Activated CD8-positive, alpha-beta memory T cell treated with anti-CD3 and anti-CD28 coated beads, Interleukin-2, amount 10 ng/mL, durations not matched to agents 7 days and 5 days (primary cell): ENCODE measurements at regions of chr9 and their contacts with region 1.

Region 1: GRCh38 chr9:127734747-127735529 is at the start of gene TOR2A:
- DNase-seq: peak; percentile 98
- ATAC-seq: peak; percentile 93
- H3K4me3 Mint-ChIP-seq: peak within 1 kb of the TSS; percentile 76
- H3K27ac Mint-ChIP-seq: peak within 1 kb of the TSS; percentile 83
- H3K4me1 Mint-ChIP-seq: peaks cover 20% of the 10 kb centered on the region
- H3K27me3 Mint-ChIP-seq: no peaks in the 10 kb centered on the region
- total RNA-seq, gene TOR2A: 24.1 to 26.8 TPM

Region 2: DNA sequence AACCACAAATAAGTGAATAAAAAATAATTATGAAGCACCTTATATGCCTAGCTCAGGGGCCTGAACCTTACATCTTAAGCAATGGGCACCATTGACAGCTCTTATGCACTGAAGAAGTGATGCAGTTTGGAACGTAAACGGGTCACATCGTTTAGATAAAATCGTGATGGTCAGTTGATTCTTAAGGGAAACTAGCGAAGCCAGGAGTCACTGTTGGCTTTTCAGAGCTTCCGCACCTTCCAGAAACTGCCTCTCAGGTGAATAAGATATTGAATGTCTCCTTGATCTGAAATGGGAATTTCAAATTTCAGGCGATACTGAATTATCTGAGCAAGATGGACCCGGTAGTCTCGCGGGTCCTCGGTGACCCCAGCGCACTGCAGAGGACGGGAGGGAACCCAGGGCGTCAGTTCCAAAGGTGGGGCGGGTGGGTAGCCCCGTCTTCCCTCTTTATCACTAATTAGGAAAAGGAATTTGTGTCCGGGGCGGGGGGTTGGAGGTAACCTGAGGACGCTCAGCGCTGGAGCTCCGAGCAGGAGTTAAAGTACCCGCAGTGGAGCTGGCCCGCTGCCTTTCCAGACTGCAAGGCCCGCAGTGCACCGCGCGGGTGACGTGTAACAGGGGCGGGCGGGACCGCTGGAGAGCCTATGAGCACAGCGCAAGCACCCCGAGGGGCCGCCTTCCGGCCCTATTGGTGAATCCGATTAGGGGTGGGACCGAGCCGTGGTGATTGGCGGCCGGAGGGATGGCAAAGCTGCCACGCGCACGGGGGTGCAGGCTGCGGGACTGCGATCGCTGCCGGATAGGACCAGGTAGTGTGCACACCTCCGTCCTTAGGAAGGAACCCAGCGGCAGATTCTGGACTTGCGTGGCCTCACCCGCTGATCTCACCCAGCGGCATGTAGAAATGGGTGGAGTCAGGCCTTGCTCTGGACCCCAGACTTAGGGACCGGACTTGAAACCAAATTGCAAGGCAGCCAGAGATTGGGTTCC is 490.0 kb before region 1 on chr9:
- CTCF ChIA-PET with region 1: no interaction called
- DNase-seq: peak; percentile 98
- ATAC-seq: peak; percentile 100
- H3K4me3 Mint-ChIP-seq: peak overlapping the region; percentile 85
- H3K27ac Mint-ChIP-seq: peak overlapping the region; percentile 67
- H3K4me1 Mint-ChIP-seq: peaks cover 13% of the 10 kb centered on the region
- H3K27me3 Mint-ChIP-seq: peaks cover 1% of the 10 kb centered on the region

Region 3: DNA sequence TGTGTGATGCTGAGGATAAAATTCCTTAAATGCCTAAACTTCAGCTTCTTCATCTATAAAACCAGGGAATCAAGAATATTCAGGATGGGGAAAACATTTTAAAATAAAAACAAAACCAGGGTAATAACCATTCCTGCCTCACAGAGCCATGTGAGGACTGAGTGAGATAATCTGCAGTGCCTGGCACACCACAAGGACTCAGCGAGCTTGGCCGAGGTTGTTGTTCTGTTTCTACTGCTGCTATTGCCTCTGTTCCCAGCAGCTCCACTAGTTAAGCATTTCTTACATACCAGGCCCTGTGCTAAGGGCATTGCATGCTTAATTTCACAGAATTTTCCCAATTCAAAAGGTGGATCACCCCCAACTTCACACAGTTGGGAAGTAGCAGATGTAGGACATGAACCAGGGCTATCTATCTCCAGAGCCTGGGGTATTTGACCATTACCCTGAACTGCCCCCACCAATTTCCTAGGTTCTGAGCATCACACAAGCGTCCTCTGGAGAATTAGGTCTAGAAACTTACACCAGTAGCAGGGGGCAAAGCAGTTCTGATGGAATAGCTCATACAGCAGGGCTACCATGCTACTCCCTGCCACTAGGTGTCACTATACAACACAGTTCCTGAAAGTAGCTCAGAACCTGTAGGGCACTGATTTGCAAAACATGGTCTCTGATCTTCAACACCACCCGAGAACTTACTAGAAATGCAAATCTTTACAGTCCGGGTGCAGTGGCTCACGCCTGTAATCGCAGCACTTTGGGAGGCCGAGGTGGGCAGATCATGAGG is 209.3 kb before region 1 on chr9:
- CTCF ChIA-PET with region 1: interaction called, 16 read pairs
- DNase-seq: peak; percentile 51
- ATAC-seq: peak; percentile 55
- H3K4me3 Mint-ChIP-seq: no peak overlapping the region
- H3K27ac Mint-ChIP-seq: no peak overlapping the region
- H3K4me1 Mint-ChIP-seq: peaks cover 16% of the 10 kb centered on the region
- H3K27me3 Mint-ChIP-seq: no peaks in the 10 kb centered on the region

Region 4: GRCh38 chr9:127586537-127586936 is 148.4 kb before region 1 on chr9:
- CTCF ChIA-PET with region 1: interaction called, 45 read pairs
- DNase-seq: peak; percentile 77
- ATAC-seq: peak; percentile 82
- H3K4me3 Mint-ChIP-seq: no peak overlapping the region
- H3K27ac Mint-ChIP-seq: no peak overlapping the region
- H3K4me1 Mint-ChIP-seq: peaks cover 22% of the 10 kb centered on the region
- H3K27me3 Mint-ChIP-seq: peaks cover 16% of the 10 kb centered on the region

Region 5: GRCh38 chr9:127707726-127708147 is 27.2 kb before region 1 on chr9:
- CTCF ChIA-PET with region 1: interaction called, 28 read pairs
- DNase-seq: peak; percentile 77
- ATAC-seq: peak; percentile 74
- H3K4me3 Mint-ChIP-seq: no peak overlapping the region
- H3K27ac Mint-ChIP-seq: no peak overlapping the region
- H3K4me1 Mint-ChIP-seq: peaks cover 36% of the 10 kb centered on the region
- H3K27me3 Mint-ChIP-seq: no peaks in the 10 kb centered on the region

Region 6: GRCh38 chr9:127763918-127764384 is 29.0 kb after region 1 on chr9:
- CTCF ChIA-PET with region 1: interaction called, 40 read pairs
- DNase-seq: no peak
- ATAC-seq: peak; percentile 45
- H3K4me3 Mint-ChIP-seq: no peak overlapping the region
- H3K27ac Mint-ChIP-seq: peak overlapping the region; percentile 54
- H3K4me1 Mint-ChIP-seq: peaks cover 48% of the 10 kb centered on the region
- H3K27me3 Mint-ChIP-seq: no peaks in the 10 kb centered on the region

Region 7: DNA sequence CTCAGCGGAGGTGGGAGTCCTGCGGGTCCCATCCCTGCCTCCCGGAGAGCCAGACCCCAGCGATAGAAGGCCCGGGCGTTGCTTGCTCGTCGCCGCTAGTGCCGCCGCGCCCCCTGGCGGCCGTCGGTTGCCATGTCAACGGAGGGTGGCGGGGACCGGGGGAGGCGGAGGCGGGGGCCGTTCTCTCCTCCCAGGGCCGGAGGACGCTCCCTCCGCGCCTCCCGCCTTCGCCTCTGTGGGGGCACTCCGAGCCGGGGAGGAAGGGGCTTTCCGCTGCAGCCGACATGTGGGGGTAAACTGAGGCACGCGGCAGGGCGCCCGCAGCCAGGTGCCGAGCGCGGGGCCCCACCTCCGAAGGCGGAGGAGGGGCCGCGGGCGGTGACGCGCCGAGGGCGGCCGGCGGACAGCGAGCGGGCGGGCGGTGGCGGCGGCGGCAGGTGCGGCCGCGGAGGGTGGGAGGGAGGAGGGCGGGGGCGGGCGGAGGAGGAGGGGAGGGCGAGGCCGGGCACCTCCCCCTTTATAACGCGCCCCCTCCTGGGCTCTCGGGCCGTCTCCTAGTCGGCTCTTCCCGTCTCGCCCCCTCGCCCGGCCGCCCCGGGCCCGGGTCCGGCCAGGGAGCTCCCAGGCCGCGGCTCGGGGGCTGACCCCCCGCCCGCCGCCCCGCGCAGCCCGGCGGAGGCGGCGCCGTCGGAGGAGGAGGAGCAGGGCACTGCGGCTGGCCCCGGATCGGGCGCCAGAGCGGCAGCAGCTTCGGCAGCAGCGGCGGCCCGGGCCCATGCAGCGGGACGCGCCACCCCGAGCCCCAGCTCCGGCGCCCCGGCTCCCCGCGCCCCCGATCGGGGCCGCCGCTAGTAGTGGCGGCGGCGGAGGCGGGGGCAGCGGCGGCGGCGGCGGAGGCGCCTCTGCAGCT is 50.3 kb after region 1 on chr9:
- CTCF ChIA-PET with region 1: interaction called, 86 read pairs
- DNase-seq: peak; percentile 94
- ATAC-seq: peak; percentile 46
- H3K4me3 Mint-ChIP-seq: peak overlapping the region; percentile 95
- H3K27ac Mint-ChIP-seq: peak overlapping the region; percentile 89
- H3K4me1 Mint-ChIP-seq: peaks cover 78% of the 10 kb centered on the region
- H3K27me3 Mint-ChIP-seq: no peaks in the 10 kb centered on the region

Region 8: GRCh38 chr9:127903557-127904475 is 168.9 kb after region 1 on chr9:
- CTCF ChIA-PET with region 1: interaction called, 11 read pairs
- DNase-seq: peak; percentile 97
- ATAC-seq: peak; percentile 48
- H3K4me3 Mint-ChIP-seq: peak overlapping the region; percentile 83
- H3K27ac Mint-ChIP-seq: peak overlapping the region; percentile 100
- H3K4me1 Mint-ChIP-seq: peaks cover 54% of the 10 kb centered on the region
- H3K27me3 Mint-ChIP-seq: no peaks in the 10 kb centered on the region